Aorta (tissue), 5 donors: ENCODE measurements at regions of chr17 and their contacts with region 1.

Region 1: DNA sequence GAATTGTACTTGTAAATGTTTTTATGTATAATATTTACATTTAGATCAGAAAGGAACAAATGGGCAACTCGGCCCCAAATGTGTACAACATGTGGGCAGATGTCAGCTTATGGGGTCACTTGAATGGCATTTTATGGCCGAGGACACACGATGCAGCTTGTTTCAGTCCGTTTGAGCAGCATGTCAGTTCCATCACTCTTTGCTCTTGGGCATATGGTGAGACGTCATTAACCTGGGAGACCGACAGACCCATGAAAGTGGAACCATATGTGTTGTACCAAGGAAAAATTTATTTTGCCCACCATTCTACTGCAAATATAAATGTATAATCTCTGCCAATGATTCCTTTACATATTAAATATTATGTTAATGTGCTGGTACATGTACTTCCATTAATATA is 561.9 kb upstream of the SOX9 start:
- DNase-seq: no peak
- ATAC-seq: no peak
- H3K4me3 ChIP-seq: no peak overlapping the region
- H3K27ac ChIP-seq: no peak overlapping the region
- H3K4me1 ChIP-seq: no peaks in the 10 kb centered on the region
- H3K27me3 ChIP-seq: no peaks in the 10 kb centered on the region

Region 2: DNA sequence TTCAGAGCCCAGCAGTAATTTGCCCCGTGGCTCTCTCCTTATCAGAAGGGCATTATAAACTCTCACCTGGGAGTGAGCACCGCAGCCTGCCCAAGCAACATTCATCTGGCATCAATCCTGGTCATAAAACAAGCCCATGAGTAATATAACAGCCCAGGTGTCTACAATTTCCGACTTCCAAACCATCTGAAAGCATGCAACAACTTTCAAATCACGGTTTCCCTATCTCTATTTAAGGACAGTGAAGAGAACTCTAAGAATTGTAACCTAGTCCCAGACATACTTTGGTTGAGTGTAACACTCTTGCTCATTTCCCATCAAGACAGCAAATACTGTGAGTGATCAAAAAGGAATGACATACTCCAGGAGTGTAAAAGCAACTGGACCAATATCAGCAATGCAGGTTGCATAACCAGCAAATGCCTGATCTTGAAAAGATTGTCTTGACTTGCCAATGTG is 74.5 kb after region 1 on chr17:
- intact Hi-C with region 1: loop called (anchors 10 kb)
- DNase-seq: no peak
- ATAC-seq: no peak
- H3K4me3 ChIP-seq: no peak overlapping the region
- H3K27ac ChIP-seq: no peak overlapping the region
- H3K4me1 ChIP-seq: no peaks in the 10 kb centered on the region
- H3K27me3 ChIP-seq: no peaks in the 10 kb centered on the region